Prostate gland (tissue), 2 donors: ENCODE measurements at regions of chr11 and their contacts with region 1.

Region 1: GRCh38 chr11:115504276-115505158 is at the start of gene CADM1:
- DNase-seq: peak; percentile 98
- H3K4me3 ChIP-seq: peak within 1 kb of the TSS; percentile 53 to 59
- H3K27ac ChIP-seq: peak within 1 kb of the TSS; percentile 75 to 79
- H3K4me1 ChIP-seq: peaks cover 9% of the 10 kb centered on the region
- H3K27me3 ChIP-seq: no peaks in the 10 kb centered on the region
- CTCF ChIP-seq: peak; percentile 76 to 98 (median 84)
- POLR2A ChIP-seq: peak; percentile 94
- total RNA-seq, gene CADM1: 49.6 to 137 TPM

Region 2: DNA sequence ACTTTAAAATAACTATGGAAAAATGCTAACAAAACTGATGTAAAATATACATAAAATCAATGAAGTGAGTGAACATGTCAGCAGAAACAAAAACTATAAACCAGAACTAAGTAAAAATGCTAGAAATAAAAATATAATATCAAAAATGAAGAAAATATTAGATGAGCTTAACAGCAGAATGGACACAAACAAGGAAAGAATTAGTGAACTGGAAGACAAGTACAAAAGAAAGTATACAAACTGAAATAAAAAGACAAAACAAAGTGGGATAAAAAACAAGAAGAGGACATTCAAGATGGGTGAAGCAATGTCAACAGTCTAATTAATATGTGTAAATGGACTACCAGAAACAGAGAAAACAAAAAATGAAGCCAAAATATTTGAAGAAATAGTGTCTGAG is 487.0 kb before region 1 on chr11:
- intact Hi-C with region 1: no loop called
- DNase-seq: no peak
- H3K4me3 ChIP-seq: no peak overlapping the region
- H3K27ac ChIP-seq: no peak overlapping the region
- H3K4me1 ChIP-seq: no peaks in the 10 kb centered on the region
- H3K27me3 ChIP-seq: no peaks in the 10 kb centered on the region
- CTCF ChIP-seq: no peak
- POLR2A ChIP-seq: no peak

Region 3: DNA sequence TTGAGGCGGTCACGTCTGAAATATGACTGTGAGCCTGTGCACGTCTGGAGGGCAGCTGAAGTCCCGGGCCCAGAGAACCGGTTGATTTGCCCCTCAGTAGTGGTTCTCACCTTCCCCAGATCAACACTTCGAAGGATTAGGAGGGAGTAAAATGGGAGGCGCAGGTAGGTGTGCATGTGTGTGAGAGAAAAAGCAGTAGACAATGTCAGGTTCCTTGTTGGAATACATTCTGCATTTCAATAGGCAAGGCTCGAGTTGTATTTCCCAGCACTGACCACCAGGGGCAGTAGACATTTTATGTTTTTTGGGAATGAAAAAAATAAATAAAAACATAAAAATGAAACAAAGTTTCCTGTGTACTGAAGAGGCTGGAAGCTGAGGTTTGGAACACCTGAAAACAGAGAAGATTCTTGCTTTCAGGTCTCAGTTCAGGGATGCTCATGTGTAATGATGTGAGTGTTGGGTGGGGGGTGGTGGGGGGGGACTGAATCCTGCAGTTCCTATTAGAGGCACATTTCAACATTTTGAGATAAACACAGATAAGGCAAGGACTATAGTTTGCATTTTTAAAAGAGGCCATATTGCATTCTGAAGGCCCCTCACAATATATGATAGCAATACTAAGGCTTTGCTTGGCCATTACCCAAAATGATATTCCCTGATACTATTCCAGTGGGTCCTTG is 334.2 kb before region 1 on chr11:
- intact Hi-C with region 1: loop called (anchors 5 kb)
- DNase-seq: no peak
- H3K4me3 ChIP-seq: no peak overlapping the region
- H3K27ac ChIP-seq: no peak overlapping the region
- H3K4me1 ChIP-seq: no peaks in the 10 kb centered on the region
- H3K27me3 ChIP-seq: no peaks in the 10 kb centered on the region
- CTCF ChIP-seq: peak in 3 of 4 experiments; percentile 24 to 54 (median 45)
- POLR2A ChIP-seq: no peak

Region 4: DNA sequence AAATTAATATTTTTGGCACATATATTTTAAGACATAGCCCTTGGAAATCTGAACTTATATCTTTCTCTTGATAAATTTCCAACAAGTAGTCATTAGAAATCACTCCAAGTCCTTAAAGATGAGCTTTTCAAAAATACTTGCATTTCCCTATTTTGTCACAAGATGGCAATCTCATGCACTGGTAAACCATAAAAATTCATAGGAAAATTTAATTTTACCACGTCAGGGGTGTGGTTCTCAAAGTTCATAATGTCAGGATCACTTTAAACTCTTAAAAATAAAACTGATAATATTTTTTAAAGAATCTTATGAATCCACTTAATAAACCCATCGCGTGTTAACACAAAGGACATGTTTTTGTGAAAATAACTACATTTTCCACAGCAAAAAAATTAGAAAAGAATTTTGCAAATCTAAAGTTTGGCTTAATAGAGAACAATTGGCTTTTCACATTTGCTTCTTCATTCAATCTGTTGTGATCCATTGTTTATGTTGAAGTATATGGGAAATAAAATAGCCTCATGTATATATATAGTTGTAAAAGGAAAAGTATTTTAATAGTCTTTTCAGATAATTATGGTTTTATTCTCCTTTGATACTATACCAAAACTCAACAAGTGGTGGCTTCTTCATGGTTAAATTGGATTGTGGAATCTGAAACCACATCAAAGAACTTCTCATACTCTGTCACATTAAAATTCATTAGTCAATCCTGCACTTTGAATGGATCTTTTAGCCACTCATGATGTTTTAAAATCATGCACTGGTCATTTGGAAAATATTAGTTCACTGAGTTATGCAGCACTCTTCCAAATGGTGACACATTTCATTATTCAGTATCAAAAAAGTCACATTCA is 169.4 kb before region 1 on chr11:
- intact Hi-C with region 1: loop called (anchors 5 kb)
- DNase-seq: no peak
- H3K4me3 ChIP-seq: no peak overlapping the region
- H3K27ac ChIP-seq: no peak overlapping the region
- H3K4me1 ChIP-seq: no peaks in the 10 kb centered on the region
- H3K27me3 ChIP-seq: no peaks in the 10 kb centered on the region
- CTCF ChIP-seq: peak; percentile 14 to 76 (median 66)
- POLR2A ChIP-seq: no peak

Region 5: GRCh38 chr11:115408378-115408921 is 96.1 kb before region 1 on chr11:
- intact Hi-C with region 1: no loop called
- DNase-seq: no peak
- H3K4me3 ChIP-seq: no peak overlapping the region
- H3K27ac ChIP-seq: no peak overlapping the region
- H3K4me1 ChIP-seq: no peaks in the 10 kb centered on the region
- H3K27me3 ChIP-seq: no peaks in the 10 kb centered on the region
- CTCF ChIP-seq: no peak
- POLR2A ChIP-seq: no peak

Region 6: GRCh38 chr11:115623021-115623451 is 118.5 kb after region 1 on chr11:
- intact Hi-C with region 1: no loop called
- DNase-seq: peak; percentile 11
- H3K4me3 ChIP-seq: no peak overlapping the region
- H3K27ac ChIP-seq: no peak overlapping the region
- H3K4me1 ChIP-seq: no peaks in the 10 kb centered on the region
- H3K27me3 ChIP-seq: no peaks in the 10 kb centered on the region
- CTCF ChIP-seq: no peak
- POLR2A ChIP-seq: no peak

Region 7: DNA sequence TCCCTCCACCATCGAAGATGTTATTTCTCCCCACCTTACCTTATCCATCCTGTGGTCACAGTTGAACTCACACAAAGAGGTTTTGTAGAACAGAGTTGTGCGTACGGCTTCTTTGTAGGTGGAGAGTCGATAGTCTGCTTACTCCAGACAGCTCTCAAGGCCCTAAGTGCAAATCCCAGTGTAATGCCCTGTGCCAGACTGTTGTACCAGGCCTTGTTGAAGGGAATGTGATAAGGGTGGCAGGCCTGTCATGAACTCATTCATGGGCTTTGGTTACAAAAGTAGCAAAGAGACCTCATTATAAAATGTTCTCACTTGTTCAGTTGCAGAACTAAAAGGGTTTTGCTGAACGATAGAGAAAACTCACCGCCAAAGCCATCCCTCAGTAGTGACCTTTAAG is 288.4 kb after region 1 on chr11:
- intact Hi-C with region 1: no loop called
- DNase-seq: no peak
- H3K4me3 ChIP-seq: no peak overlapping the region
- H3K27ac ChIP-seq: no peak overlapping the region
- H3K4me1 ChIP-seq: no peaks in the 10 kb centered on the region
- H3K27me3 ChIP-seq: no peaks in the 10 kb centered on the region
- CTCF ChIP-seq: no peak
- POLR2A ChIP-seq: no peak